Right ventricle myocardium inferior (tissue), 1 donor: ENCODE measurements at regions of chr11 and their contacts with region 1.

Region 1: GRCh38 chr11:3057069-3057963 is at the start of gene CARS1:
- DNase-seq: peak; percentile 99
- ATAC-seq: peak; percentile 97
- total RNA-seq, gene CARS1: 17.2 TPM

Region 2: DNA sequence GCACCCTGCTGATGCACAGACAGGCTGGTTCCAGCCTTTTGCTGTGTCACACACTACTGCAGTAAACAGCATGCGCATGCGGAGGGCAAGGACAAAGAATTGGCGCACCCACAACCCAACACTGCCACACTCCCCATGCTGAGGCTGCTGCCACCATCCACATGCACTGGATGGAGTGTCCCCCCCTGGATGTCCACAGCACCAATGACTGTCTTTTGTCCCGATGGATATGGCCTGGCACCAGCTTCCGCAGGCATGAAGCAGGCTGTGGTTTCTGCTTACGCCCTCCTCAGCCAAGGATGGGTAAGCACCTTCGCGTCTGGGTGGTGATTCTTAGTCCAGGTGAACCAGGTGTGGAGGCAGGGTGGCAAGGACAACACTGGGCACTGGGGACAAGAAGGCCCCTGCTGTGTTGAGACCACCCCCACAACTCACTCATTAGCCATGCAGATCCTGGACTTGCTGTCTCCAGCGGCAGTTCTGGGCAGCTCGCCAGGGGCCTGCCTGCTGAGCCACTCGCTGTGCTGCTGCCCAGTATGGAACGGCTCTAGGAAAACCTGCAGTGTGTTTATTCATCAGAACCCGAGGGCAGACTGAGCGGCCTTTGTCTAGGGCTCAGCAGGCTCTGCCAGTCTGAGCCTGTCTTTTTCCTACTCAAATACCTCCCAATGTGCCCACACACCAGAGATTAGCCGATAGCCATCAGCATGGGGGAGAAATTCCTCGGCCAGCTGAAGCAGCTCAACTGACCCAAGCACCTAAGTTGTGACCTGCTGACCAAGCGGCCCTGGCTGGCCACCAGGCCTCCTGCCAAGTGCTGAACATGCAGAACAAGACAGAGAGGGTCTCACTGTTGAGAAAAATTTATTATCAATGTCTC is 57.0 kb before region 1 on chr11:
- intact Hi-C with region 1: no loop called
- DNase-seq: peak; percentile 86
- ATAC-seq: peak; percentile 75

Region 3: DNA sequence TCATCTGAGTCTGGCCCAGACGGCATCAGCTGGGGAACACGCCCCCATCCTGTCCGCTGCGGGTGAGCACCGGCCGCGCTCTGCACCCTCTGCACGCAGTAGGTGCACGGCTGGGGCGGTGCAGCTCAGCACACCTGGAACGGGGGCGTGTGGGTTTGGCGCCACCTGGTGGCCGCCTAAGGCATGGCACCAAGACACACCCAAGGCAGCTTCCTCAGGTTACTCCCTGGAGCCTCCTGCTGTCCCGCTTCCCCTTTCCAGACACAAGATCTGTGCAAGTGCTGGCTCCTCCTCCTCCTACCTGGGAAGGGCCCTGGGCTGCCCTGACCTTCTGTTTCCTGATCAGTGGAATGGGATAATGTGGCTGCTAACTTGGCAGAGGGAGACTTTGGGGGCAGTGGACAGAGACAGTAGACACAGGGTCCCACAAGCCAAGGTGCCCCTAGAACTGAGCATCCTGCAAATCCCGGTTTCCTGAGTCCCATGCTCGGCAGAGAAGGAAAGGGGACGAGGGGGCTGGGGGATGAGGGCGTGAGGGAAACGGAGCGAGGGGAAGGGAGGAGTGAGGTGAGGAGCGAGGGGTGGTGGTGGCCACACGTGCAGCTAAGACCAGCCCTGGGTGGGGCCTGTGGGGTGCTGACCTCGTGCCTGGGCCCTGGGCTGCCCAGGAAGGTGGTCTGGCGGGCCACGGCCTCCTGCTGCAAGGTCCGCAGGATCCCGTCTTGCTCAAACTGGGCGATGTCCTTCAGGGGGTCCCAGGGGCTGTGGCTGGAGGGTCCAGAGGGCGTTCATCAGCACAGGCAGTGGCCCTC is 34.7 kb after region 1 on chr11:
- intact Hi-C with region 1: loop called (anchors 5 kb)
- DNase-seq: peak; percentile 87
- ATAC-seq: peak; percentile 59

Region 4: GRCh38 chr11:3146612-3147256 is 89.4 kb after region 1 on chr11:
- intact Hi-C with region 1: no loop called
- DNase-seq: no peak
- ATAC-seq: peak; percentile 47